Calu3 (cell line): ENCODE measurements at regions of chr4 and their contacts with region 1.

Region 1: GRCh38 chr4:147425019-147425418 is 55.9 kb upstream of the EDNRA start:
- DNase-seq: no peak
- H3K4me3 Mint-ChIP-seq: no peak overlapping the region
- H3K27ac Mint-ChIP-seq: no peak overlapping the region
- H3K4me1 Mint-ChIP-seq: no peaks in the 10 kb centered on the region
- H3K27me3 Mint-ChIP-seq: no peaks in the 10 kb centered on the region
- CTCF ChIP-seq: no peak

Region 2: GRCh38 chr4:147846318-147847155 is 421.5 kb after region 1 on chr4:
- CTCF ChIA-PET with region 1: interaction called, 12 read pairs
- intact Hi-C with region 1: no loop called
- DNase-seq: no peak
- H3K4me3 Mint-ChIP-seq: no peak overlapping the region
- H3K27ac Mint-ChIP-seq: no peak overlapping the region
- H3K4me1 Mint-ChIP-seq: no peaks in the 10 kb centered on the region
- H3K27me3 Mint-ChIP-seq: no peaks in the 10 kb centered on the region
- CTCF ChIP-seq: no peak